ENCODE measurements at regions of chr10 and their contacts with region 1.

Region 1: GRCh38 chr10:125048101-125048864 is 106.4 kb downstream of the ZRANB1 start:
- DNase-seq: peak; percentile 75 to 95
- H3K4me3 ChIP-seq: no peak overlapping the region
- H3K27ac ChIP-seq: no peak overlapping the region
- H3K4me1 ChIP-seq: peaks cover 3 to 15% (median 12%) of the 10 kb centered on the region in 4 experiments
- H3K27me3 ChIP-seq: no peaks in the 10 kb centered on the region
- CTCF ChIP-seq: peak; percentile 94 to 98 (median 95)
- EP300 ChIP-seq: peak in 1 of 2 experiments; percentile 41; a peak in 1 of 3 replicates
- POLR2A ChIP-seq: no peak
- RAD21 ChIP-seq: peak; percentile 86 to 90

Region 2: GRCh38 chr10:124935946-124936345 is 112.3 kb before region 1 on chr10:
- CTCF ChIA-PET with region 1: no interaction called
- POLR2A ChIA-PET with region 1: no interaction called
- DNase-seq: no peak
- H3K4me3 ChIP-seq: no peak overlapping the region
- H3K27ac ChIP-seq: no peak overlapping the region
- H3K4me1 ChIP-seq: no peaks in the 10 kb centered on the region; a peak in 1 of 7 replicates
- H3K27me3 ChIP-seq: no peaks in the 10 kb centered on the region
- CTCF ChIP-seq: no peak
- EP300 ChIP-seq: no peak
- POLR2A ChIP-seq: no peak
- RAD21 ChIP-seq: no peak

Region 3: DNA sequence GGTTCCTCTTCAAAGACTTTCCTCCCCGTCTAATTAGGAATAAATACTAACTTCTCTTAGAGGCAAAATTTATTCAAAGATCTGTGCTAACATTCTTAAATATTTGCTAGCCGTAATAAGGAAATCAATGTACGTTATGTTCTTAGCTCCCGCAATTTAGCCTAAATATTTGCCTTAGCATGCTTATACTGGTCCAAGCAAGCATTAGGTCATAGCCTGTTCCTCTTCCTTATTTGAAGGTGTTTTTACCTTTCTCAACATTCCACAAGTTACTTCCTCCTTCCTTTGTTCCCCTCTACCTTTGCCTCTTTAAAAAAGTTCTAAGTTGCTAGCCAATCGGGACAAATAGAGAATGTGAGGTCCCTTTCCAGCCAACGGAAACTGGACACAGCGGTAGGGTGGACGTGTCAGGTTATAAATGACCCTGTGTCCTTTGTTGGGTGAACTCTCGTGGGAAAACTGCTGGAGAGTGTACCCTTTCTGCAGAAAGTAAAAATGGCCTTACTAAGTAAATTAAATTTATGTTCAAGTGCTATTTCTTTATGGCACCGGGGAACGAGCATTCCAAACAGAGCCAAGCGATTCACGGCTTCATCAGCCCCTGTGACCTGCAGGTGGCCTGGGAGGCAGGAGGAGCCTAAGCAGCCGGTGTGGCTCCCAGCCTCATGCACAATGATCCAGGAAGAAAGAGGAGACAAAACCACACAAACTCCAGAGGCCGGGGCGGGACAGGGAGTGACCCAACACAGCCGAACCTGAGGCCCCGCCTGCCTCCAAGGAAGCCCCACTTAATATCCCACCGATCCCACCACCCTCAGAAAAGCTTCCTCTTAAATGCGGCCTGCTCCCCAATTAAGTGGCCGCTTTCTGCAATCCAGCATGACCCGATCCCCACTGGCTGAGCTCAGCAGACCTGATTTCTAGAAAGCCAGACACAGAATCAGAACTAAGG is 39.3 kb before region 1 on chr10:
- CTCF ChIA-PET with region 1: interaction called, 14 read pairs
- POLR2A ChIA-PET with region 1: no interaction called
- DNase-seq: no peak
- H3K4me3 ChIP-seq: no peak overlapping the region
- H3K27ac ChIP-seq: no peak overlapping the region
- H3K4me1 ChIP-seq: peaks cover 0 to 16% (median 8%) of the 10 kb centered on the region in 4 experiments; a peak in 5 of 7 replicates
- H3K27me3 ChIP-seq: no peaks in the 10 kb centered on the region
- CTCF ChIP-seq: no peak
- EP300 ChIP-seq: no peak
- POLR2A ChIP-seq: no peak
- RAD21 ChIP-seq: no peak

Region 4: GRCh38 chr10:125068406-125068805 is 20.1 kb after region 1 on chr10:
- CTCF ChIA-PET with region 1: interaction called, 110 read pairs
- POLR2A ChIA-PET with region 1: interaction called, 7 read pairs
- DNase-seq: no peak
- H3K4me3 ChIP-seq: no peak overlapping the region
- H3K27ac ChIP-seq: no peak overlapping the region
- H3K4me1 ChIP-seq: peaks cover 0 to 26% (median 2%) of the 10 kb centered on the region in 4 experiments; a peak in 4 of 7 replicates
- H3K27me3 ChIP-seq: no peaks in the 10 kb centered on the region
- CTCF ChIP-seq: no peak
- EP300 ChIP-seq: no peak
- POLR2A ChIP-seq: no peak
- RAD21 ChIP-seq: no peak

Region 5: GRCh38 chr10:125102231-125102630 is 53.9 kb after region 1 on chr10:
- CTCF ChIA-PET with region 1: interaction called, 13 read pairs
- POLR2A ChIA-PET with region 1: interaction called, 3 read pairs
- DNase-seq: no peak
- H3K4me3 ChIP-seq: no peak overlapping the region
- H3K27ac ChIP-seq: no peak overlapping the region
- H3K4me1 ChIP-seq: peaks cover 21 to 53% (median 37%) of the 10 kb centered on the region in 4 experiments
- H3K27me3 ChIP-seq: no peaks in the 10 kb centered on the region
- CTCF ChIP-seq: no peak
- EP300 ChIP-seq: no peak
- POLR2A ChIP-seq: no peak
- RAD21 ChIP-seq: no peak

Measured in H1 (cell line).